Mammary epithelial cell (primary cell): ENCODE measurements at regions of chr5 and their contacts with region 1.

Region 1: GRCh38 chr5:52799983-52800393 is 12.3 kb downstream of the ITGA1 start:
- DNase-seq: peak; percentile 90
- H3K4me3 ChIP-seq: peak overlapping the region; percentile 65 to 91 (median 71)
- H3K27ac ChIP-seq: peak overlapping the region; percentile 94
- H3K4me1 ChIP-seq: peaks cover 20% of the 10 kb centered on the region
- H3K27me3 ChIP-seq: no peaks in the 10 kb centered on the region
- CTCF ChIP-seq: no peak

Region 2: DNA sequence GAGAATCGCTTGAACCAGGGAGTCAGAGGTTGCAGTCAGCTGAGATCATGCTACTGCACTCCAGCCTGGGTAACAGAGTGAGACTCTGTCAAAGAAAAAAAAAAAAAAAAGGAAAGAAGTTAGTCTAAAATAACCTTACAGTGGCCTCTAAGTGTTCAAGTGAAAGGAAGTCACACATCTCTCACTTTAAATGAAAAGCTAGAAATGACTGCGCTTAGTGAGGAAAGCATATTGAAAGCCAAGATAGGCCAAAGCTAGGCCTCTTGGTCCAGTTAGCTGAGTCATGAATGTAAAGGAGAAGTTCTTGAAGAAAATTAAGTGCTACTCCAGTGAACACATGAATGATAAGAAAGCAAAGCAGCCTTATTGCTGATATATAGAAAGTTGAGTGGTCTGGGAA is 25.8 kb after region 1 on chr5:
- CTCF ChIA-PET with region 1: no interaction called
- dilution Hi-C with region 1: no loop called
- in situ Hi-C with region 1: no loop called
- intact Hi-C with region 1: no loop called
- DNase-seq: no peak
- H3K4me3 ChIP-seq: no peak overlapping the region
- H3K27ac ChIP-seq: no peak overlapping the region
- H3K4me1 ChIP-seq: no peaks in the 10 kb centered on the region
- H3K27me3 ChIP-seq: no peaks in the 10 kb centered on the region
- CTCF ChIP-seq: no peak

Region 3: DNA sequence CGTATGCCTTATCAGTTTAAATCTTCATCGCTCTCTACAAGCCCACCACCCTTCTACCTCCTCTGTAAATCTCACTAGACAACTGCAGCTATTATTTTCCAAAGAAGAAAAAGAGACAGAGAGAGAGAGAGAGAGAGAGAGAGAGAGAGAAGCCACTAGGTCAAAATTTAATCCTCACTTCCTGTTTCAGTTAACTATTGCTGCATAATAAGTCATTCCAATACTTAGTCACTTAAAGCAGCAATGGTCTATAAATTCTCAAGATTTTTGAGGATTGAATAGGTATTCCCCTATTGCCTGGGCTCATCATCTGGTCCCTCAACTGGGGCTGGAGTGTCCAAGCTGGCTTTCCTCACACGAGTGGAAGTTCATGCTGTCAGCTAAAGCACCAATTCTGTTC is 56.6 kb after region 1 on chr5:
- CTCF ChIA-PET with region 1: no interaction called
- dilution Hi-C with region 1: no loop called
- in situ Hi-C with region 1: no loop called
- intact Hi-C with region 1: loop called (anchors 5 kb)
- DNase-seq: peak; percentile 16
- H3K4me3 ChIP-seq: no peak overlapping the region
- H3K27ac ChIP-seq: no peak overlapping the region
- H3K4me1 ChIP-seq: peaks cover 4% of the 10 kb centered on the region
- H3K27me3 ChIP-seq: no peaks in the 10 kb centered on the region
- CTCF ChIP-seq: no peak

Region 4: DNA sequence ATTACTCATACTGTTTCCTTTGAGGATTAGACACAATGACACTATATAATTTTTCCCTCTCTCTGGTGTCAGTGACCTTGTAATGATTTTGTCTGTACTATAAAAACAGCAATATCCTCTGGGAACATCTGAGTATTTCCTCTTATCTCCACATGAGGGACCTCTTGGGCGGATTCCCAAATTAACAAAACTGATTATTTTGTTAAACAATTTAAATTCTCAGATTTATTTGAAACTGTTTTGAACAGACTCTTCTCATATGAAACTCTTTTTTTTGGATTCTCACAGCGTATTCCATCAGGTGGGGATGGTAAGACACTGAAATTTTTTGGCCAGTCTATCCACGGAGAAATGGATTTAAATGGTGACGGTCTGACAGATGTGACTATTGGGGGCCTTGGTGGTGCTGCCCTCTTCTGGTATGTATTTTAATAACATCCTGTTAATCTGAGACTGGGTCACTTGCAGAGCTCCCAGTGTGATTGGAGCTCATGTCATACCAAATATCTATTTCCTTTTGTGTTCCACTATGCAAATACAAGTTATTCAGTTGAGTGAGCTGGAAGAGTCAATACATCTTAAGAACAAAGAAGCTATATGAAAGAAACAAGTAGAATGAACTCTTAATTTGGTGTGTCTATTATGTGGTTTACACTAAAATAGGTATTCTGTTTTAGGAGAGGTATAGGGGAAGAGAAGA is 115.3 kb after region 1 on chr5:
- CTCF ChIA-PET with region 1: interaction called, 11 read pairs
- dilution Hi-C with region 1: no loop called
- in situ Hi-C with region 1: loop called in 1 of 2 experiments (anchors 10 kb)
- intact Hi-C with region 1: loop called (anchors 5 kb)
- DNase-seq: peak; percentile 66
- H3K4me3 ChIP-seq: peak overlapping the region; percentile 25 to 52 (median 39)
- H3K27ac ChIP-seq: no peak overlapping the region
- H3K4me1 ChIP-seq: no peaks in the 10 kb centered on the region
- H3K27me3 ChIP-seq: no peaks in the 10 kb centered on the region
- CTCF ChIP-seq: peak; percentile 43 to 64

Region 5: DNA sequence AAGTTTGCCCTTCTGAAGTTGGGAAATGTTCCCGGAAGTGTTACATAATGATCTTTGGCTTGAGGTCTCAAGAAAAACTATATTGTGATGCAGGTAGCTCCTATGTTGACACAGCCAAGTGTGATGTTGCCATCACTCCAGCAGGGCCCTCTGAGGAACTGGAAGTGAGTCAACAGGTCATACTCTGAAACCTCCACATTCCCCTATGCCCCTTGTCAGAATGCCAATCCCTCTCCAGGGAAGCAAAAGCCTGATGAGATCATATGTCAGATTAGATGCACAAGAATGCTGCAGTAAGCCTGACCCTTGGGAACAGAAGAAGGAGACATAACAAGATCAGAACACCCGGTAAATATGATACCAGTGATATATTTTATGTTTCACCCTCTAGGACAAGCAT is 122.4 kb after region 1 on chr5:
- CTCF ChIA-PET with region 1: no interaction called
- dilution Hi-C with region 1: no loop called
- in situ Hi-C with region 1: loop called in 1 of 2 experiments (anchors 10 kb)
- intact Hi-C with region 1: loop called (anchors 5 kb)
- DNase-seq: peak; percentile 96
- H3K4me3 ChIP-seq: no peak overlapping the region
- H3K27ac ChIP-seq: peak overlapping the region; percentile 61
- H3K4me1 ChIP-seq: peaks cover 12% of the 10 kb centered on the region
- H3K27me3 ChIP-seq: no peaks in the 10 kb centered on the region
- CTCF ChIP-seq: no peak